T-cell (primary cell): ENCODE measurements at regions of chr16 and their contacts with region 1.

Region 1: DNA sequence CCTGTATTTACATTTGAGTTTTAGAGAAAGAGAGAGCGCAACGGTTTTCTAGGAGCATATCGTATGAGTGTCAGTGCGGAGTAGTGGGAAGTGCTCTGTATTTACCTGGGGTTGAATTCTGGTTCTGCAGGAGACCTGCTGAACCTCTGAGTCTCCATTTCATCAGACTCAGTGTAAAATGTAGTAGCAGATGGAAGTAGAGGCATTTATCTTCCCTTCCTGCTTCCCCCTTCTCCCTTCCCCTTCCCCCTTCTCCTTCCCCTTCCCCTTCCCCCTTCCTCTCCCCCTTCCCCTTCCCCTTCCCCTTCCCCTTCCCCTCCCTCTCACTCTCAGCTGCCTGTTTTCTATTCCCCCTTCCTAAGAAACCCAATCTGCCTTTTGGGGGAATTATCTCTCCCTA is 426.9 kb downstream of the NPIPA7 start:
- DNase-seq: no peak
- ATAC-seq: no peak
- H3K4me3 ChIP-seq: no peak overlapping the region
- H3K4me3 Mint-ChIP-seq: no peak overlapping the region
- H3K27ac ChIP-seq: no peak overlapping the region
- H3K27ac Mint-ChIP-seq: no peak overlapping the region
- H3K4me1 ChIP-seq: no peaks in the 10 kb centered on the region
- H3K4me1 Mint-ChIP-seq: no peaks in the 10 kb centered on the region
- H3K27me3 ChIP-seq: no peaks in the 10 kb centered on the region
- H3K27me3 Mint-ChIP-seq: peaks cover 15 to 23% of the 10 kb centered on the region in 2 donors

Region 2: DNA sequence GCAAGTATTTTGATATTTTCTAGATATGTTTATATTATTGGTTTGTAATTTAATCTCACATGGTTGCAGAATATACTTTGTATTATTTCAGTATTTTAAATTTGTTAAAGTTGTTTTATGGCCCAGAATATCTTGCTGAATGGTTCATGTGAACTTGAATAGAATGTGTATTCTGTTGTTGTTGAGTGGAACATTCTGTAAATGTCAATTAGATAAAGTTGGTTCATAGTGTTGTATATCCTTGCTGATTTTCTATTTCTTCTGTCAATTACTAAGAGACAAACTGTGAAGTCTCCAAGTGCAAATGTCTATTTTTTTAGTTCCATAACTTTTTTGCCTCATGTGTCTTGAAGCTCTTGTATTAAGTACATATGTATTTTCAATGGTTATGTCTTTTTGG is 15.2 kb before region 1 on chr16:
- CTCF ChIA-PET with region 1: no interaction called
- POLR2A ChIA-PET with region 1: no interaction called
- DNase-seq: no peak
- ATAC-seq: no peak
- H3K4me3 ChIP-seq: no peak overlapping the region
- H3K4me3 Mint-ChIP-seq: no peak overlapping the region
- H3K27ac ChIP-seq: no peak overlapping the region
- H3K27ac Mint-ChIP-seq: no peak overlapping the region
- H3K4me1 ChIP-seq: no peaks in the 10 kb centered on the region
- H3K4me1 Mint-ChIP-seq: no peaks in the 10 kb centered on the region
- H3K27me3 ChIP-seq: no peaks in the 10 kb centered on the region
- H3K27me3 Mint-ChIP-seq: peaks cover 11 to 13% of the 10 kb centered on the region in 2 donors

Region 3: GRCh38 chr16:17798716-17799115 is 992.9 kb after region 1 on chr16:
- CTCF ChIA-PET with region 1: interaction called in 1 of 2 experiments, 10 read pairs
- POLR2A ChIA-PET with region 1: no interaction called
- DNase-seq: no peak
- ATAC-seq: no peak
- H3K4me3 ChIP-seq: no peak overlapping the region
- H3K4me3 Mint-ChIP-seq: no peak overlapping the region
- H3K27ac ChIP-seq: no peak overlapping the region
- H3K27ac Mint-ChIP-seq: no peak overlapping the region
- H3K4me1 ChIP-seq: no peaks in the 10 kb centered on the region
- H3K4me1 Mint-ChIP-seq: no peaks in the 10 kb centered on the region
- H3K27me3 ChIP-seq: peaks cover 0 to 2% of the 10 kb centered on the region in 2 experiments
- H3K27me3 Mint-ChIP-seq: peaks cover 1 to 11% of the 10 kb centered on the region in 2 donors